Heart left ventricle (tissue), 16 donors: ENCODE measurements at regions of chr4 and their contacts with region 1.

Region 1: GRCh38 chr4:15018361-15018760 is 16.1 kb downstream of the CPEB2 start:
- DNase-seq: no peak
- ATAC-seq: no peak
- H3K4me3 ChIP-seq: no peak overlapping the region
- H3K27ac ChIP-seq: peak overlapping the region in 2 of 12 donors; percentile 2 to 32
- H3K4me1 ChIP-seq: peaks cover 0 to 73% (median 34%) of the 10 kb centered on the region in 12 donors
- H3K27me3 ChIP-seq: no peaks in the 10 kb centered on the region
- CTCF ChIP-seq: no peak
- POLR2A ChIP-seq: no peak

Region 2: DNA sequence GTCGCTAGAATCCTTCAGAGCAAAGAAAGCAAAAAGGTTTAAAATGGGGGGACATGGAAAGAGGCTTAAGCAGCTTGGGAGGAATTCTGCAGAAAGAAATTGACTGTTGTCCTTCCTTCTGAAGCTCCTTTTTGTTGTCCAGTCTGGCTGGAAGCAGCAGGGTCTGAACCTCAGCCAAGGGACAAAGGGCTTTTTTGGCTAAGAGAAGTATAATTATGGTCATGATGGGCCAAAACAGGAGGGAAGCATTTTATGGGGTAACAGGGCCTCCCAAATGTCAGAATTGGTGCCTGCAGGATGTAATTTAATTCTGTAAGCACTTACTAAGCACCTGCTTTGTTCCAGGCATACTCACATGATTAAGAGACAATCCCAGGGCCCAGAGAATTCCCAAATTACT is 90.3 kb before region 1 on chr4:
- intact Hi-C with region 1: no loop called
- DNase-seq: no peak
- ATAC-seq: no peak
- H3K4me3 ChIP-seq: no peak overlapping the region
- H3K27ac ChIP-seq: no peak overlapping the region
- H3K4me1 ChIP-seq: peaks cover 0 to 4% (median 0%) of the 10 kb centered on the region in 12 donors
- H3K27me3 ChIP-seq: no peaks in the 10 kb centered on the region
- CTCF ChIP-seq: no peak
- POLR2A ChIP-seq: no peak

Region 3: GRCh38 chr4:15066140-15066539 is 47.8 kb after region 1 on chr4:
- intact Hi-C with region 1: no loop called
- DNase-seq: no peak
- ATAC-seq: peak in 2 of 4 donors; percentile 16 to 79
- H3K4me3 ChIP-seq: no peak overlapping the region
- H3K27ac ChIP-seq: no peak overlapping the region
- H3K4me1 ChIP-seq: peaks cover 0 to 8% (median 0%) of the 10 kb centered on the region in 12 donors
- H3K27me3 ChIP-seq: no peaks in the 10 kb centered on the region
- CTCF ChIP-seq: no peak
- POLR2A ChIP-seq: no peak

Region 4: DNA sequence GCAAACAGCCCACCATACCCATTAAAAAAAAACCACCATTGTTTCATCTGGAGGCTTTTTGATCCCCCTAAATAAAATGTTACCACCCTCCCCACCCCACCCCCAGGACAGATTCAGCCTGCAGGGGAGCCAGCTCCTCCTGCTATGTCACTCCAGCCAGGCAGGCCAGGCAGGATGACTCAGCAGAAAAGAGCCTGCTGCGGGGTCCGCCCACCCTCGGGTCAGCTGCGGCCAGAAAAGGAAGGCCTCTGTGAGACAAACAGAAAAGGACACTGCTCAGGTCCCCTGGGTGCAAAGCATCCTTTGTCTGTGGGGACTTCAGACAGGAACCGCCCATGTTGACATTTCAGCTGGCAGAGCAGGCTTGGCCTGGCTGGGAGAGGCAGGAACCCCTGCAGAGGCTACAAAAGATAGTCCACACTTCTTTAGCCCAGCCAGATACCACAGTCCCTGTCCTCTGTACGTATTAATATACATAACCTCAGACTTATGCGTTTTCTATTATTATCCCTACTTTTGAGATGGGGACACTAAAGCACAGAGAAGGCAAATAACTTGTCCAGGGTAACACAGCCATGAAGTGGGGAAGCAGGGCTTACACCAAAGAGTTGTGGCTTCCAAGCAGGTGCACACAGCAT is 131.6 kb after region 1 on chr4:
- intact Hi-C with region 1: loop called in 1 of 10 experiments (anchors 10 kb)
- DNase-seq: peak; percentile 82 to 89 (median 85)
- ATAC-seq: peak; percentile 81 to 95 (median 93)
- H3K4me3 ChIP-seq: no peak overlapping the region
- H3K27ac ChIP-seq: peak overlapping the region in 11 of 12 donors; percentile 22 to 73 (median 55)
- H3K4me1 ChIP-seq: peaks cover 0 to 48% (median 17%) of the 10 kb centered on the region in 12 donors
- H3K27me3 ChIP-seq: no peaks in the 10 kb centered on the region
- CTCF ChIP-seq: peak in 3 of 12 donors; percentile 17 to 23 (median 22)
- POLR2A ChIP-seq: no peak

Region 5: GRCh38 chr4:15213302-15213970 is 195.1 kb after region 1 on chr4:
- intact Hi-C with region 1: no loop called
- DNase-seq: no peak
- ATAC-seq: no peak
- H3K4me3 ChIP-seq: no peak overlapping the region
- H3K27ac ChIP-seq: peak overlapping the region in 1 of 12 donors; percentile 43
- H3K4me1 ChIP-seq: peaks cover 0 to 2% (median 0%) of the 10 kb centered on the region in 12 donors
- H3K27me3 ChIP-seq: no peaks in the 10 kb centered on the region
- CTCF ChIP-seq: no peak
- POLR2A ChIP-seq: no peak